Psoas muscle (tissue), 8 donors: ENCODE measurements at regions of chr2 and their contacts with region 1.

Region 1: DNA sequence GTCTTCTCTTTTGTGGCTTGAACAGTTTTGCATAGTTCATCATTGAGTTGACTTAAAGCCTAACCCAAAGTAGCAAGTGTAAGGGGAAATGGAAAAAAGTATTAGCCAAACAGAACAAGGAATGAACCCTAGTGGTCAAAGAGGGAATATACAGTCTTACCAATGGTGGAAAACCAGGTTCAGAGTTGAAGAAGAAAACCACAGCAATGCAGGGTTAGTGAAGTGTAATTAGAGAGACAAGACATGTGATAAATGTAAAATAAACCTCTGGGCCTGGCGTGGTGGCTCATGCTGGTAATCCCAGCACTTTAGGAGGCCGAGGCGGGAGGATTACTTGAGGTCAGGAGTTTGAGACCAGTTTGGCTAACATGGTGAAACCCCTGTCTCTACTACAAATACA is 2.4 kb downstream of the TTN start:
- DNase-seq: peak; percentile 36 to 74
- ATAC-seq: peak; percentile 24 to 36 (median 32)
- H3K4me3 ChIP-seq: peak overlapping the region; percentile 80
- H3K27ac ChIP-seq: peak overlapping the region; percentile 96
- H3K4me1 ChIP-seq: peaks cover 13% of the 10 kb centered on the region
- H3K27me3 ChIP-seq: no peaks in the 10 kb centered on the region
- CTCF ChIP-seq: peak; percentile 73

Region 2: DNA sequence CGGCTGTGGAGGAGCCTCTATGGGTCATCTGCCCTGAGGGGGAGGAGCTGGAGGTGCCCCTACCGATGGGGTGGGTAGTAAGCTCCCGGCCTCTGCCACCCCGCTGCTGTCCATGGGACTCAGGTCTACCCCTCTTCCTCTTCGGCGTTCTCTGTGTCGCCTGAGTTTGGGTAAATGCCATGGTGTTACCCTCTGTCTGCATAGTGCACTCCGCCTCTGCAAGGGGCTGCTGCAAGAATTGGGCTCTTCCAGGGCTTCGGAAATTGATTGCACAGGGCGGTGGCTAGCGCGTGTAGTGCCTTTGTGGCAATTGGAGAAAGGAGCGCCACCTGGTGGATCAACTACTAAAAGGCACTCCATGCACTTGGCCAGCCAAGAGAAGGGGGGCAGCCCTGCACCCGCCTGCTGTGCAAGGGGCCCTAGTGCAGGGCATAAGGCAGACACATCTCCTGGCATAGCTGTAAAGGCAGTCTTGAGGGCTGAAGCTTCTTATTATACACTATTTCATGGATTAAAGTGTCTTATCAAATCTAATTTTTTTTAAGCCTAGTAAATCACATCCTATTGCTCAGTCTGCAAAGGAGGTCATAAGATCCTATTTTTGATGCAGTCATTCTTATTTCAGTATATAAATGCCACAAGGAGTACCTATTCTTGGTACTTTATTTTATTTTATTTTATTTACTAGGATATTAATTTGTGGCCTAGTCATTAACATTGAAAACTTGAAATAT is 1041.1 kb before region 1 on chr2:
- intact Hi-C with region 1: no loop called
- DNase-seq: peak; percentile 68 to 82
- ATAC-seq: peak; percentile 52 to 98 (median 91)
- H3K4me3 ChIP-seq: no peak overlapping the region
- H3K27ac ChIP-seq: no peak overlapping the region
- H3K4me1 ChIP-seq: no peaks in the 10 kb centered on the region
- H3K27me3 ChIP-seq: no peaks in the 10 kb centered on the region
- CTCF ChIP-seq: peak; percentile 72

Region 3: GRCh38 chr2:178731300-178731699 is 73.5 kb before region 1 on chr2:
- intact Hi-C with region 1: no loop called
- DNase-seq: peak in 1 of 2 donors; percentile 59
- ATAC-seq: peak; percentile 29 to 58 (median 44)
- H3K4me3 ChIP-seq: no peak overlapping the region
- H3K27ac ChIP-seq: peak overlapping the region; percentile 69
- H3K4me1 ChIP-seq: peaks cover 88% of the 10 kb centered on the region
- H3K27me3 ChIP-seq: no peaks in the 10 kb centered on the region
- CTCF ChIP-seq: no peak

Region 4: GRCh38 chr2:178863856-178864620 is 59.2 kb after region 1 on chr2:
- intact Hi-C with region 1: loop called (anchors 1 to 5 kb)
- DNase-seq: peak; percentile 68 to 89
- ATAC-seq: peak; percentile 79 to 85 (median 81)
- H3K4me3 ChIP-seq: peak overlapping the region; percentile 58
- H3K27ac ChIP-seq: peak overlapping the region; percentile 86
- H3K4me1 ChIP-seq: peaks cover 60% of the 10 kb centered on the region
- H3K27me3 ChIP-seq: no peaks in the 10 kb centered on the region
- CTCF ChIP-seq: no peak

Region 5: GRCh38 chr2:178882666-178883440 is 78.1 kb after region 1 on chr2:
- intact Hi-C with region 1: no loop called
- DNase-seq: no peak
- ATAC-seq: peak in 1 of 4 donors; percentile 44
- H3K4me3 ChIP-seq: no peak overlapping the region
- H3K27ac ChIP-seq: peak overlapping the region; percentile 39
- H3K4me1 ChIP-seq: peaks cover 8% of the 10 kb centered on the region
- H3K27me3 ChIP-seq: no peaks in the 10 kb centered on the region
- CTCF ChIP-seq: no peak